ENCODE measurements at regions of chr21 and their contacts with region 1.

Region 1: GRCh38 chr21:43012595-43012994 is 38.2 kb downstream of the PKNOX1 start:
- DNase-seq: no peak
- ATAC-seq: no peak
- H3K4me3 Mint-ChIP-seq: no peak overlapping the region
- H3K27ac Mint-ChIP-seq: no peak overlapping the region
- H3K4me1 Mint-ChIP-seq: no peaks in the 10 kb centered on the region
- H3K27me3 Mint-ChIP-seq: no peaks in the 10 kb centered on the region

Region 2: GRCh38 chr21:42865776-42866160 is 146.8 kb before region 1 on chr21:
- CTCF ChIA-PET with region 1: no interaction called
- POLR2A ChIA-PET with region 1: no interaction called
- intact Hi-C with region 1: no loop called
- DNase-seq: no peak
- ATAC-seq: no peak
- H3K4me3 Mint-ChIP-seq: no peak overlapping the region
- H3K27ac Mint-ChIP-seq: no peak overlapping the region
- H3K4me1 Mint-ChIP-seq: peaks cover 13% of the 10 kb centered on the region
- H3K27me3 Mint-ChIP-seq: no peaks in the 10 kb centered on the region

Region 3: DNA sequence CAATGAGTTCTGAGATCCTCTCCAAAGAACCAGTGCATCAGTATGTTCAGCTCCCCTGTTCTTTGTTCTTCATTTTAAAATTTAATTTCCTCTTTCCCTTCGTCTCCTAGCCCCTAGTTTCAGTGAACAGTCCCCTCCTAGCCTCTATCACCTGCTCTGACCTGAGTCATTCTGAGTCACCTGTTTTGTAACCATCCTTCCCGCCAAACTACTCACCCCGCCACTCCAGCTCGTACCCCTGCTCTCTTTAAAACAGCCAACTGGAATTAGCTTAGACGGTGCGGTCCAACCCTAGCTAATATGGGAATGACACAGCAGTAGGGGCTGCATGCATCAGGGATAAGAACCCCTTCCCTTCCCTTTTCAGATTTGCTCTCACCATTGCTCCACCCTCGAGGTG is 70.3 kb before region 1 on chr21:
- CTCF ChIA-PET with region 1: no interaction called
- POLR2A ChIA-PET with region 1: no interaction called
- intact Hi-C with region 1: no loop called
- DNase-seq: no peak
- ATAC-seq: no peak
- H3K4me3 Mint-ChIP-seq: no peak overlapping the region
- H3K27ac Mint-ChIP-seq: no peak overlapping the region
- H3K4me1 Mint-ChIP-seq: no peaks in the 10 kb centered on the region
- H3K27me3 Mint-ChIP-seq: no peaks in the 10 kb centered on the region

Region 4: GRCh38 chr21:42964546-42965225 is 47.9 kb before region 1 on chr21:
- CTCF ChIA-PET with region 1: no interaction called
- POLR2A ChIA-PET with region 1: no interaction called
- intact Hi-C with region 1: loop called in 1 of 2 experiments (anchors 5 kb)
- DNase-seq: no peak
- ATAC-seq: no peak
- H3K4me3 Mint-ChIP-seq: no peak overlapping the region
- H3K27ac Mint-ChIP-seq: no peak overlapping the region
- H3K4me1 Mint-ChIP-seq: no peaks in the 10 kb centered on the region
- H3K27me3 Mint-ChIP-seq: no peaks in the 10 kb centered on the region

Measured in activated CD4-positive, alpha-beta T cell treated with anti-CD3 and anti-CD28 coated beads for 36 hours (primary cell).